Caco-2 (cell line): ENCODE measurements at regions of chr2 and their contacts with region 1.

Region 1: DNA sequence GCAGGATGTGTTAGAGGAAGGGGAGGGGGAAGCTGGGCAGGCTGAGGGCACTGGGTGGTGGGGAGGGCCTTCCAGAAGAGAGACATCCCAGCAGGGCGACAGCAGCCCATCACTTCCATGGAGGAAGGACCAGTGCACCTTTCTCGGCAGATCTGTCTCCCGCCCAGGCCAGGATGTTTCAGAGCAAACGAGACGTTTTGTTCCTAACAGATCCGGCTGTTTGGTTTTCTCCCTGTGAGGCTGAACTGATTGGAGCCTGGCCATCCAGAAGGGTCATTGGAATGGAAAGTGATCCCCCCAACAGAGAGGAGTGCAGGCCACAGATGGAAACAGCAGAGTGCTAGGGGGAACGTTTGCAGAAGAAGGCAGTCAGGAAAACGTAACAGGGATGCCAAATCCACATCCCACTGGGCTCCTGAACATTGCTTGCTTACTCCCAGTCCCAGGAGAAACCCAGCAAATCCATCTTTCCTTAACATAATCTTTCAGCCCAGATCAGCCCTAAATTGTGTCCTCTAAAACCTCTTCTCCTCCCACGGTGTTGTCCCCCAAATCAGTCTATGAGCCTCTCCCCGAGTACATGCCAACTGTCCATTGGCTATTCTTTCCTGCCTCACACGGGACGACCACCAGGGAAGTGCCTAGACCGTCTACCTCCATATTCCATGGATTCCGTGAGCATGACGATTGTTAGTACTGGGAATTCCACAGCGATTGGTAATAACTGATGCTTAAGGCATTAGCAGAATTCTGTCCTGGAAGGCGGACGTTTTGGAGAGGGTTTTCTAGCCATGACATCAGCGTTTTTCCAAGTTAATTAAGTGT is 126.8 kb downstream of the SEPTIN10 start:
- DNase-seq: no peak
- H3K4me3 ChIP-seq: no peak overlapping the region
- H3K4me3 Mint-ChIP-seq: no peak overlapping the region
- H3K27ac Mint-ChIP-seq: no peak overlapping the region
- H3K4me1 ChIP-seq: no peaks in the 10 kb centered on the region
- H3K4me1 Mint-ChIP-seq: no peaks in the 10 kb centered on the region
- H3K27me3 ChIP-seq: no peaks in the 10 kb centered on the region
- H3K27me3 Mint-ChIP-seq: peaks cover 4% of the 10 kb centered on the region
- CTCF ChIP-seq: no peak

Region 2: GRCh38 chr2:109311771-109312170 is 175.2 kb before region 1 on chr2:
- CTCF ChIA-PET with region 1: interaction called, 10 read pairs
- POLR2A ChIA-PET with region 1: no interaction called
- intact Hi-C with region 1: no loop called
- DNase-seq: no peak
- H3K4me3 ChIP-seq: no peak overlapping the region
- H3K4me3 Mint-ChIP-seq: no peak overlapping the region
- H3K27ac Mint-ChIP-seq: no peak overlapping the region
- H3K4me1 ChIP-seq: no peaks in the 10 kb centered on the region
- H3K4me1 Mint-ChIP-seq: no peaks in the 10 kb centered on the region
- H3K27me3 ChIP-seq: no peaks in the 10 kb centered on the region; the same call in 1 of the 2 replicates
- H3K27me3 Mint-ChIP-seq: peaks cover 13% of the 10 kb centered on the region
- CTCF ChIP-seq: no peak

Region 3: DNA sequence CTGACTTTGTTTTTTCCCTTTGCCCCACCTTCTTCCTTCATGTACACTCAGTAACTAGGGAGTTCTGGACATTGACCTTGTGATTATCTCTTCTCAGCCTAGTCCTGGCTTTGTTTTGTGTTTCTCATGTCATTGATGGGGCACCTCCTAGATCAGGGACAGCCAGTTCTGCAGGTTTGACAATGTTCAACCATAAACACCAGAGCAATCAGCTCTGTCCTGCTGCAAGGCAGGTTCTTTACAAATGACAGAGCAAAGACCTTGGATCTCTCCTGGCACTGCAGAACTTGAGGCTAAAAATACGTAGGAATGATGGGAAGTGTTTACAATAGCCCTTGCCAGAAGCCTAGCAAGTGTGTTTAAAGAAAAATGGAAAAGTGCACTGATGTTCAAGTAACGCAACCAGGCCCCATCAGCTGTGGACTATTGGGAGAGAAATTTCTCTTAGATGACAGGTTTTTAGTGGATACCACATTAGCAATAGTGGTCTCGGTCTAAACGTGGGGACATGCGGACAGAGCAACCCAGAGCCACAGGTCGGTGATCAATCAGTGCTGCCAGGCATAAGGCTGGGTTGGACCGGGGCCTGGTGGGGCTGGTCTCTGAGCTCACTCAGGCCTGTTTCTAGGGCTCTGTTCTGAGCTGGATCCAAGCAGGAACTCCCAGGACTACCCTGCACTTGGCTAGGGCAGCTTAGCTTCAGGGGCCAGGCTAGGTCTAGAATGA is 204.1 kb after region 1 on chr2:
- CTCF ChIA-PET with region 1: no interaction called
- POLR2A ChIA-PET with region 1: no interaction called
- intact Hi-C with region 1: no loop called
- DNase-seq: peak; percentile 94 to 95
- H3K4me3 ChIP-seq: no peak overlapping the region
- H3K4me3 Mint-ChIP-seq: peak overlapping the region; percentile 59
- H3K27ac Mint-ChIP-seq: peak overlapping the region; percentile 86
- H3K4me1 ChIP-seq: peaks cover 61% of the 10 kb centered on the region
- H3K4me1 Mint-ChIP-seq: peaks cover 61% of the 10 kb centered on the region
- H3K27me3 ChIP-seq: no peaks in the 10 kb centered on the region
- H3K27me3 Mint-ChIP-seq: no peaks in the 10 kb centered on the region
- CTCF ChIP-seq: no peak